ENCODE measurements at regions of chr20 and their contacts with region 1.

Region 1: DNA sequence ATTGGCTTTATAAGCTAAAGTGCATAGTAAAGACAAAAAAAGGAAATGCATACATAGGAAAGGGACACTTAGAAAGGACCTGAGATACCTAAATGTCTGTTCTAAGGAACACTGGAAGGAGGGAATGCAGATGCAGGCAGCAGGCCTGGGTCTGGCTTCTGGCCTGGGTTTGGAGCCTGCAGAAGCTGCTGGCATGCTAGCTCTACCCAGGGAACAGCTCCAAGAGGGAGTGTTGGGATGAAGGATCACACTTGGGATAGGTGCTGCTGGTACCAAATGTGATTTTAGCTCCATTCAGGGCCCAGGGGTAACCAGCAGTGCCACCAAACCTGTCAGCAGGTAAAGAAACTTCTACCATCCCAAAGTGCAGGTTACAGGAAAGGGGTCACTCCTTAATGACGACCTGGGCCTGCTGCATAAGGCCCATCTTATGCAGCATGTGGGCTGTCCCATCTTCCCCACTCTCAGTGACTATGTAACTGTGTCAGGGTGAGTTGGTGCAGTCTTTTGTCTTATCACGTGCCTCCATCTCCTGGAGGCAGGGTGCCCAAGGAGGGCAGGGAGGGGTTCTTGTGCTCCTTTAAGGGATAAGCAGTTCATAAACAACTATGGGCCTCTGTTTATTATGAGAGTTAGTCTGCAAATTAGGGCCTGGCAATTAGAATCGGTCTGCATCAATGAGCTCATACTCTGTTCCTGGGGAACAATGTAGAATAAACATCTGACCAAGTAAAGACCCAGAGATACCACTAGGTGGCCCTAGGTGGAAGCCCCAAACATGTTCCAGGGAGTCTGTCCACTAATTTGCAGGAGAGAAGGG is 26.9 kb downstream of the DDX27 start:
- DNase-seq: peak; percentile 45 to 74 (median 72)
- H3K4me3 ChIP-seq: no peak overlapping the region
- H3K27ac ChIP-seq: no peak overlapping the region
- H3K4me1 ChIP-seq: peaks cover 2 to 22% (median 16%) of the 10 kb centered on the region in 4 experiments
- H3K27me3 ChIP-seq: no peaks in the 10 kb centered on the region

Region 2: GRCh38 chr20:49230561-49231193 is 15.5 kb before region 1 on chr20:
- CTCF ChIA-PET with region 1: interaction called, 11 read pairs
- POLR2A ChIA-PET with region 1: interaction called, 5 read pairs
- DNase-seq: peak; percentile 63 to 87 (median 83)
- H3K4me3 ChIP-seq: no peak overlapping the region
- H3K27ac ChIP-seq: peak overlapping the region; percentile 33 to 75
- H3K4me1 ChIP-seq: peaks cover 6 to 21% (median 17%) of the 10 kb centered on the region in 4 experiments
- H3K27me3 ChIP-seq: no peaks in the 10 kb centered on the region

Region 3: GRCh38 chr20:49267327-49267726 is 21.2 kb after region 1 on chr20:
- CTCF ChIA-PET with region 1: interaction called, 50 read pairs
- POLR2A ChIA-PET with region 1: no interaction called
- DNase-seq: peak in 1 of 3 donors; percentile 19
- H3K4me3 ChIP-seq: peak overlapping the region in 1 of 7 experiments; percentile 30
- H3K27ac ChIP-seq: peak overlapping the region in 1 of 2 experiments; percentile 49
- H3K4me1 ChIP-seq: peaks cover 0 to 7% (median 3%) of the 10 kb centered on the region in 4 experiments
- H3K27me3 ChIP-seq: no peaks in the 10 kb centered on the region

Region 4: GRCh38 chr20:49278036-49278817 is 32.1 kb after region 1 on chr20 and contains the start of gene ZNFX1:
- CTCF ChIA-PET with region 1: interaction called, 10 read pairs
- POLR2A ChIA-PET with region 1: interaction called, 3 read pairs
- DNase-seq: peak; percentile 98 to 99 (median 99)
- H3K4me3 ChIP-seq: peak within 1 kb of the TSS; percentile 90 to 98 (median 93)
- H3K27ac ChIP-seq: peak within 1 kb of the TSS; percentile 89 to 97
- H3K4me1 ChIP-seq: peaks cover 10 to 42% (median 31%) of the 10 kb centered on the region in 4 experiments
- H3K27me3 ChIP-seq: no peaks in the 10 kb centered on the region

Region 5: DNA sequence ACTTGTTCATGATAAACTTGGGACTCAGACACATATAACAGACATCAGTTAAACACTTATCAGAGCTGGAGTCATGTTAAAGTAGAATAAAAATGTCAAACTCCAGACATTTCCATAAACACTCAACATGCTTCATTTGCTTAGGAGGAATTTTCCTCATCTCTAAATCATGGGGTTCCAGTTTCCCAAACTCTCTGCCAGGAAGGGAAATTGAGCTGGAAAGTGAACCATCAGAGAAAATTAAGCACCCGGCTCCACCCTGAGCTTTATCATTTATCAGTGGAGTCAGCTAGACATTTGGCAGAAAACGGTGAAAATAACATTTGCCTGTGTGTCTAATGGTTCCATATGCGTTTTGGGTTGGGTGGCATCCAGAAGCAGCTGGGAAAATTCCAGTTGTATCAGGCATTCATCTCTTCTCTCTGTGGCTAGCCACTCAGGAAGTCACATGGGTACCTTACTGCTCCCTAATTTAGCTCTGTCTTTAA is 57.0 kb after region 1 on chr20:
- CTCF ChIA-PET with region 1: interaction called, 11 read pairs
- POLR2A ChIA-PET with region 1: interaction called, 3 read pairs
- DNase-seq: peak in 2 of 3 donors; percentile 46 to 65
- H3K4me3 ChIP-seq: peak overlapping the region in 2 of 7 experiments; percentile 6 to 34
- H3K27ac ChIP-seq: no peak overlapping the region
- H3K4me1 ChIP-seq: peaks cover 0 to 32% (median 22%) of the 10 kb centered on the region in 4 experiments
- H3K27me3 ChIP-seq: no peaks in the 10 kb centered on the region

Region 6: GRCh38 chr20:49323622-49324238 is 77.6 kb after region 1 on chr20:
- CTCF ChIA-PET with region 1: interaction called, 83 read pairs
- POLR2A ChIA-PET with region 1: interaction called, 5 read pairs
- DNase-seq: peak; percentile 94 to 99 (median 98)
- H3K4me3 ChIP-seq: peak overlapping the region in 1 of 7 experiments; percentile 28
- H3K27ac ChIP-seq: peak overlapping the region; percentile 74 to 82
- H3K4me1 ChIP-seq: peaks cover 0 to 38% (median 21%) of the 10 kb centered on the region in 4 experiments
- H3K27me3 ChIP-seq: peaks cover 0 to 22% (median 7%) of the 10 kb centered on the region in 5 experiments